Mammary epithelial cell (primary cell): ENCODE measurements at regions of chr6 and their contacts with region 1.

Region 1: GRCh38 chr6:18829272-18829870 is 442.2 kb downstream of the RNF144B start:
- DNase-seq: no peak
- H3K4me3 ChIP-seq: no peak overlapping the region
- H3K27ac ChIP-seq: no peak overlapping the region
- H3K4me1 ChIP-seq: no peaks in the 10 kb centered on the region
- H3K27me3 ChIP-seq: no peaks in the 10 kb centered on the region
- CTCF ChIP-seq: no peak

Region 2: DNA sequence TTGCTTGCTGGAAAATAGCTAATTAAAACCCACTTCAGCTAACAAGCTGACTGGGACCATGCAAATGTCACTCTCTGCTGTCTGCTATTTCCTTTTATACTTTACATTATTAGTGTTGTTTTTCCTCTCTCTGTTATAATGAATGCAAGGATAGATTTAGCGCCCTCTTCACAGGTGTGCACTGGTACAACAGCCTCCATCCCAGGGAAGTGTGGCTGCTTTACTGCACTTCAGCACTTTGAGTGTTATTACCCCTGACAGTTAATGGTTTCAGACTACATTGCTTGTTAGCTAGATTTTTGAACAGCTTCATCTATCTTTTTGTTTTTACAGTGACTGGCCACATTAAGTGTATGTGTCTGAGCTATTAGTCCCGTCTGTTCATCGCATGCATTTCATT is 36.5 kb before region 1 on chr6:
- CTCF ChIA-PET with region 1: no interaction called
- dilution Hi-C with region 1: loop called (anchors 5 kb)
- in situ Hi-C with region 1: no loop called
- intact Hi-C with region 1: no loop called
- DNase-seq: no peak
- H3K4me3 ChIP-seq: no peak overlapping the region
- H3K27ac ChIP-seq: no peak overlapping the region
- H3K4me1 ChIP-seq: no peaks in the 10 kb centered on the region
- H3K27me3 ChIP-seq: no peaks in the 10 kb centered on the region
- CTCF ChIP-seq: no peak

Region 3: GRCh38 chr6:18816046-18816445 is 13.3 kb before region 1 on chr6:
- CTCF ChIA-PET with region 1: no interaction called
- dilution Hi-C with region 1: no loop called
- in situ Hi-C with region 1: no loop called
- intact Hi-C with region 1: no loop called
- DNase-seq: no peak
- H3K4me3 ChIP-seq: no peak overlapping the region
- H3K27ac ChIP-seq: no peak overlapping the region
- H3K4me1 ChIP-seq: no peaks in the 10 kb centered on the region
- H3K27me3 ChIP-seq: no peaks in the 10 kb centered on the region
- CTCF ChIP-seq: no peak

Region 4: DNA sequence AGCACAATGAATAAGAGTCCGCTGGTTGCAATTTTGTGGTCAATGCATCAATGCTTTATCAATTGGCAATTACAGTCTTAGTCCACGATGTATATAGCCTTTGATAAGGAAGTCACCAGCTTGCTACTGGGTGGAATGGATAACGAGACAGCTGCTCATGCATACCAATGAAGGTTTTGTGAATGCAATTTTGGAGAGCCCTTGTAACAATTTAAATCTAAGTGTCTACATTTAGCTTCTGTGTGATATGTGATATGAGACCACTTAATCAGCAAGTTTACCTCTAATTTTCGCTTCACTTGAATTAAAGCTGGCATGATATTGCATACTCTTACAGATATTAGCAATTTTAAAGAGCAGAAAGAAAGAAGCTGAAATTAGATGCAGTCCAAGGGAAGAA is 101.7 kb after region 1 on chr6:
- CTCF ChIA-PET with region 1: no interaction called
- dilution Hi-C with region 1: loop called (anchors 5 kb)
- in situ Hi-C with region 1: no loop called
- intact Hi-C with region 1: no loop called
- DNase-seq: no peak
- H3K4me3 ChIP-seq: no peak overlapping the region
- H3K27ac ChIP-seq: no peak overlapping the region
- H3K4me1 ChIP-seq: no peaks in the 10 kb centered on the region
- H3K27me3 ChIP-seq: no peaks in the 10 kb centered on the region
- CTCF ChIP-seq: no peak